ENCODE measurements at regions of chr19 and their contacts with region 1.

Region 1: DNA sequence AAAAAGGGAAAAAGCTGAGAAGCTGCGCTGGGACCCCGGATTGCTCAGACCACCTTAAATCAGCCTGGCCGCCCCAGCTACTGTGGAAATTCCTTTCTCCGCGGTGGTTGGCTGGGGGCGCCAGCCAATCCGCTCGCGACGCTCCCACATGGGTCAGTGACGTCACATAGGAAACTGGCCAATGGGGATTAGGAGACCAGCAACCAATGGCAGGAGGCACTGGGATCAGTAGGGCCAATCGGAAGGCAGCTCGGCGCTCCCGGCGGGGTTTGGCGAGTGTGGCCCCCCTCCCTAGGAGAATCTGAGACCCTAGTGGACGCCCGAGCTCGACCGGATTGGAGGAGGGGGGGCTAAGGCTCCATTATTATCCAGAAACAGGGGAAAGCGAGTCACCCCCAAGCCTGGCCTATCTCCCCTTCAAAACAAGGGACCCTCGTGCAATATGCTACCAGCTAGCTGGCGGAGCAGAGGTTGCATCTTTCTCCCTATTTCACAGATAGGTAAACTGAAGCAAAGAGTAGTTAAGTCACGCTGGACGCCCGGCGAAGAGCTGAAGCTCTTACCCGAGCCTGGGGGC is 6.5 kb upstream of the TLE2 start:
- DNase-seq: peak; percentile 99
- ATAC-seq: peak; percentile 92 to 93
- H3K4me3 ChIP-seq: peak overlapping the region; percentile 51 to 90 (median 81)
- H3K27ac ChIP-seq: peak overlapping the region; percentile 88 to 100 (median 98)
- H3K4me1 ChIP-seq: peaks cover 19 to 20% of the 10 kb centered on the region in 2 donors
- H3K27me3 ChIP-seq: no peaks in the 10 kb centered on the region
- CTCF ChIP-seq: peak in 1 of 5 experiments; percentile 14
- POLR2A ChIP-seq: peak in 1 of 2 donors; percentile 48

Region 2: GRCh38 chr19:2096480-2097329 is 938.9 kb before region 1 on chr19 and contains the start of gene IZUMO4:
- in situ Hi-C with region 1: no loop called
- intact Hi-C with region 1: loop called (anchors 10 kb)
- DNase-seq: peak; percentile 97 to 98
- ATAC-seq: peak; percentile 86 to 87
- H3K4me3 ChIP-seq: peak within 1 kb of the TSS; percentile 82 to 91 (median 87)
- H3K27ac ChIP-seq: peak within 1 kb of the TSS; percentile 86 to 99 (median 92)
- H3K4me1 ChIP-seq: peaks cover 38 to 39% of the 10 kb centered on the region in 2 donors
- H3K27me3 ChIP-seq: no peaks in the 10 kb centered on the region
- CTCF ChIP-seq: peak; percentile 13 to 56 (median 28)
- POLR2A ChIP-seq: peak; percentile 37 to 40
- total RNA-seq, gene IZUMO4: 0.93 to 1.4 TPM in 2 of 4 donors, not detected in the others

Region 3: GRCh38 chr19:2977001-2977685 is 58.5 kb before region 1 on chr19 and contains the start of gene TLE6:
- in situ Hi-C with region 1: loop called in 1 of 4 experiments (anchors 10 kb)
- intact Hi-C with region 1: loop called (anchors 1 kb)
- DNase-seq: peak; percentile 93 to 94
- ATAC-seq: peak; percentile 88 to 89
- H3K4me3 ChIP-seq: peak within 1 kb of the TSS; percentile 54 to 81 (median 66)
- H3K27ac ChIP-seq: peak within 1 kb of the TSS; percentile 48 to 81 (median 72)
- H3K4me1 ChIP-seq: peaks cover 37 to 46% of the 10 kb centered on the region in 2 donors
- H3K27me3 ChIP-seq: no peaks in the 10 kb centered on the region
- CTCF ChIP-seq: no peak
- POLR2A ChIP-seq: no peak
- total RNA-seq, gene TLE6: 0.62 to 1.2 TPM in 2 of 4 donors, not detected in the others

Region 4: GRCh38 chr19:3062168-3063102 is 26.8 kb after region 1 on chr19 and contains the start of gene TLE5:
- in situ Hi-C with region 1: no loop called
- intact Hi-C with region 1: loop called (anchors 2 kb)
- DNase-seq: peak in 1 of 2 donors; percentile 57
- ATAC-seq: peak; percentile 72 to 79
- H3K4me3 ChIP-seq: peak within 1 kb of the TSS; percentile 78 to 92 (median 84)
- H3K27ac ChIP-seq: peak within 1 kb of the TSS; percentile 90 to 99 (median 96)
- H3K4me1 ChIP-seq: peaks cover 38 to 41% of the 10 kb centered on the region in 2 donors
- H3K27me3 ChIP-seq: no peaks in the 10 kb centered on the region
- CTCF ChIP-seq: no peak
- POLR2A ChIP-seq: peak; percentile 17 to 37
- total RNA-seq, gene TLE5: 437 to 686 (median 474) TPM

Region 5: GRCh38 chr19:3075895-3076431 is 40.3 kb after region 1 on chr19:
- in situ Hi-C with region 1: no loop called
- intact Hi-C with region 1: loop called (anchors 1 kb)
- DNase-seq: no peak
- ATAC-seq: peak; percentile 55 to 61
- H3K4me3 ChIP-seq: peak overlapping the region in 2 of 4 donors; percentile 13 to 26
- H3K27ac ChIP-seq: peak overlapping the region in 2 of 4 donors; percentile 3 to 70
- H3K4me1 ChIP-seq: peaks cover 9 to 11% of the 10 kb centered on the region in 2 donors
- H3K27me3 ChIP-seq: no peaks in the 10 kb centered on the region
- CTCF ChIP-seq: peak; percentile 76 to 98 (median 96)
- POLR2A ChIP-seq: no peak

Region 6: DNA sequence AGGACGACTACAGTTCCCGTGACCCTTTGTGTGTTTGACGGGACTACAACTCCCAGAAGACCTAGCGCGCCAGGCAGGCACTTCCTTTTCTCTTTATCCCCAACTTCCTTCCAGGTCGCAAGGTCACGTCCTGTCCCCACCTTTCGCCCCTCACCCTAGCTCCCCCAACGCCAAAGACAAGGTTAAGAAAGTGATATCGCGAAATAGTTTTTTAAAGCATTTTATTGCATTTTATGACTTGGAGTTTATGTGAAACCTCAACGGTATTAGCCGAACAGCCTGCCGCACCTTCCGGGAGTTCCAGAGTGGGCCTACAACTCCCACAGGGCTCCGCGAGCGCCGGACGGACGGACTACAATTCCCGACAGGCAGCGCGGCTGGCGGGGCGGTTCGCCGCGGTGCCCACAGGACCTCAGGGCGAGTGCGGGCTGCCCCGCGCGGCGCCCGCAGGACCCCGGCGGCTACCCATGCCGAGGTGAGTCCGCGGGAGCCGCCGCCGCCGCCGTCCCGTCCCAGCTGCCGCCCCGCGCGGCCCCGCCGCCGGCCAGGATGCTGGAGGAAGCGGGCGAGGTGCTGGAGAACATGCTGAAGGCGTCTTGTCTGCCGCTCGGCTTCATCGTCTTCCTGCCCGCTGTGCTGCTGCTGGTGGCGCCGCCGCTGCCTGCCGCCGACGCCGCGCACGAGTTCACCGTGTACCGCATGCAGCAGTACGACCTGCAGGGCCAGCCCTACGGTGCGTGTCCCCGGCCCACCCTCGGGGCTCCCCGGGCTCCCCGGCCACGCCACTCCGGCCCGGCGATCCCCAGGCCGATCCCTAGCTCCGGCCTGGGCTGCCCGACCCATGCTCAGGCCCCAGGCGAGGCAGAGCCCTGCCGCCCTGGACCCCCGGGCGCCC is 150.1 kb after region 1 on chr19 and contains the start of gene NCLN:
- in situ Hi-C with region 1: no loop called
- intact Hi-C with region 1: loop called (anchors 1 kb)
- DNase-seq: peak; percentile 91 to 92
- ATAC-seq: peak; percentile 98 to 99
- H3K4me3 ChIP-seq: peak within 1 kb of the TSS; percentile 56 to 81 (median 76)
- H3K27ac ChIP-seq: peak within 1 kb of the TSS; percentile 81 to 91 (median 88)
- H3K4me1 ChIP-seq: peaks cover 4 to 16% of the 10 kb centered on the region in 2 donors
- H3K27me3 ChIP-seq: no peaks in the 10 kb centered on the region
- CTCF ChIP-seq: peak in 1 of 5 experiments; percentile 12
- POLR2A ChIP-seq: peak; percentile 60 to 67
- total RNA-seq, gene NCLN: 18.2 to 54.4 (median 43.1) TPM